ENCODE measurements at regions of chr19 and their contacts with region 1.

Region 1: DNA sequence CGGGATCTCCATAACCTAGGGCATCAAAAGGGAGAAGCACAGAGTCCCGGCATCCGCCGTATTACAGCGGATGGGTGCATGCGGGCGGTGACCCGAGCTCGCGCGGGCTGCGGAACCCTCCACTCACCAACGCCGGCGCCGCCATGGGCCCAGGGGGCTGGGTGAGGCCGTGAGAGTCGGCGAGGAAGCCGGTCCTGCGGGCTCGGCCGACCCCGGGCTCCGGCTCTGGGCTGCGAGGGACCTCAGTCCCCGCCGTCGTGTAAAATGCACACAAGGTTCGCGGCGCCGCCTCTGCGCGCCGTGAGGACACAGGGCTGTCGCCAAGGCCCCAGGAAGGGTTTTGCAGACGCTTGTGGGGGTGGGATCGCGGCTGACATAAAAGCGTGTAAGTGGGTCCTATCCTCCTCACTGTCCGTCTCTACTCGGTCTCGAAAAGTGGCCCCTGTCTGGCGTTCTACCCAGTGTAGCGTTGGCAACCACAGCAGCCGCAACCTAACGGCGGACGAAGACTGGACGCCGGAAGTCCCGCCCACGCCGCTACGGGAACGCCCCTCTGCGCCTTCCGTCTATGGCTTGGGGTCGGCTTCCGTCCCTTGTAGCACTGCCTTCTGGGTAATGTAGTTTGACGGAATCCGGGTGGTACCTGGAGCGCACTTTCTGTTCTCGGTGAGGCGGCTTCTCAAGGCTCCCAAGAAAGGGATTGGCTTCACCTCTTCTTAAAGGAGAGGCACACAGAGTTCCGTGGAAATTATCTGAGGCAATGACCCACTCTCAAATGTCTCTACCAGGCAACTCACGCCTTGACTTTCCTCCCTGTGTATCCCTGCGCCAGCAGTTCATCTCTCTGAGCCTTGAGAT is at the start of gene ZNF599:
- DNase-seq: peak; percentile 83 to 95
- ATAC-seq: peak; percentile 96 to 97 (median 97)
- H3K4me3 ChIP-seq: peak within 1 kb of the TSS; percentile 72
- H3K4me3 Mint-ChIP-seq: peak within 1 kb of the TSS; percentile 92
- H3K27ac ChIP-seq: peak within 1 kb of the TSS; percentile 73
- H3K27ac Mint-ChIP-seq: peak within 1 kb of the TSS; percentile 81 to 86
- H3K4me1 ChIP-seq: peaks cover 10% of the 10 kb centered on the region
- H3K4me1 Mint-ChIP-seq: peaks cover 13 to 19% of the 10 kb centered on the region in 2 donors
- H3K27me3 ChIP-seq: no peaks in the 10 kb centered on the region
- H3K27me3 Mint-ChIP-seq: peaks cover 8 to 9% of the 10 kb centered on the region in 2 donors
- CTCF ChIP-seq: no peak
- total RNA-seq, gene ZNF599: 4.6 to 5.1 (median 4.8) TPM

Region 2: GRCh38 chr19:34282611-34283519 is 490.1 kb before region 1 on chr19:
- intact Hi-C with region 1: no loop called
- DNase-seq: no peak
- ATAC-seq: no peak
- H3K4me3 ChIP-seq: no peak overlapping the region
- H3K4me3 Mint-ChIP-seq: no peak overlapping the region
- H3K27ac ChIP-seq: no peak overlapping the region
- H3K27ac Mint-ChIP-seq: no peak overlapping the region
- H3K4me1 ChIP-seq: no peaks in the 10 kb centered on the region
- H3K4me1 Mint-ChIP-seq: peaks cover 0 to 6% of the 10 kb centered on the region in 2 donors
- H3K27me3 ChIP-seq: no peaks in the 10 kb centered on the region
- H3K27me3 Mint-ChIP-seq: no peaks in the 10 kb centered on the region
- CTCF ChIP-seq: no peak

Region 3: GRCh38 chr19:34677386-34678084 is 95.4 kb before region 1 on chr19 and contains the start of gene ZNF302:
- intact Hi-C with region 1: loop called (anchors 1 kb)
- DNase-seq: peak; percentile 93 to 96
- ATAC-seq: peak; percentile 82 to 93 (median 90)
- H3K4me3 ChIP-seq: peak within 1 kb of the TSS; percentile 65
- H3K4me3 Mint-ChIP-seq: peak within 1 kb of the TSS; percentile 98
- H3K27ac ChIP-seq: peak within 1 kb of the TSS; percentile 77
- H3K27ac Mint-ChIP-seq: peak within 1 kb of the TSS; percentile 98 to 99
- H3K4me1 ChIP-seq: peaks cover 21% of the 10 kb centered on the region
- H3K4me1 Mint-ChIP-seq: peaks cover 29% of the 10 kb centered on the region in 2 donors
- H3K27me3 ChIP-seq: no peaks in the 10 kb centered on the region
- H3K27me3 Mint-ChIP-seq: peaks cover 7 to 23% of the 10 kb centered on the region in 2 donors
- CTCF ChIP-seq: no peak
- total RNA-seq, gene ZNF302: 13.8 to 23.6 (median 17.8) TPM

Region 4: GRCh38 chr19:34733826-34734600 is 38.9 kb before region 1 on chr19 and contains the start of gene ZNF181:
- intact Hi-C with region 1: loop called (anchors 1 kb)
- DNase-seq: peak; percentile 73 to 90
- ATAC-seq: peak; percentile 82 to 86 (median 83)
- H3K4me3 ChIP-seq: peak within 1 kb of the TSS; percentile 76
- H3K4me3 Mint-ChIP-seq: peak within 1 kb of the TSS; percentile 92
- H3K27ac ChIP-seq: peak within 1 kb of the TSS; percentile 93
- H3K27ac Mint-ChIP-seq: peak within 1 kb of the TSS; percentile 90 to 94
- H3K4me1 ChIP-seq: peaks cover 24% of the 10 kb centered on the region
- H3K4me1 Mint-ChIP-seq: peaks cover 21 to 31% of the 10 kb centered on the region in 2 donors
- H3K27me3 ChIP-seq: no peaks in the 10 kb centered on the region
- H3K27me3 Mint-ChIP-seq: no peaks in the 10 kb centered on the region
- CTCF ChIP-seq: no peak
- total RNA-seq, gene ZNF181: 3.2 to 3.7 (median 3.5) TPM

Region 5: DNA sequence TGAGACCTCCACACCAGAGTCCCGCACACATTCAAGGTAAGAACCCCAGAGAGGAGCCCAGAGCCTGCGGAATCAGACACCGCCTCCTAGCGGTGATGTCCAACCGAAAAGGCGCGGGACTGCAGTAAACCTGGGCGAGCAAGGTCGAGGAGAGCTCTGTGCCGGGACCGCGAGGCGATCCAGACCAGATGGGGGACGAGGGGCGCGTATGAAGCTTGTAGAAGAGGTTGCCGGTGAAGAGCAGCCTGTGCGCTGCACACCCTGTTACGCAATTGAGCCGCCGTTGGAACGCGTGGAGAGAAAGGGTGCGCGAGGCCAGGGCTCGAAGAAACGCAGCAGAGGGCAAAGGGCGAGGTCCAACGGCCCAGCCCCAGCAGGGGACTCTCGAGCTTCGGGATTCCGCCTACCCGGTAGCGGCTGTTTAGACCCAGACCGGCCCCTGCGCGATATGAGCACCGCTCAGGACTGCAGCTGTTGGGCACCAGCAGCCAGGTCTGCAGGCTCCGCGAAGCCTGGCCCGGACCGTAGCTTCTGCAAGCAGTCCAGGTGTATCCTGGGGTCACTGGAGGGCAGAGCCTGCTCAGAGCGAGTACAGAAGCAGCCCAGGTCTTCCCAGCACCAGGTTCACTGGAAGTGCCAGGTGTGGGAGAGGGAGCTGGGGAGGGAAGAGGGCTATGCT is 66.0 kb after region 1 on chr19:
- intact Hi-C with region 1: no loop called
- DNase-seq: peak in 1 of 2 donors; percentile 65
- ATAC-seq: peak in 1 of 3 donors; percentile 38
- H3K4me3 ChIP-seq: no peak overlapping the region
- H3K4me3 Mint-ChIP-seq: peak overlapping the region; percentile 42
- H3K27ac ChIP-seq: no peak overlapping the region
- H3K27ac Mint-ChIP-seq: no peak overlapping the region
- H3K4me1 ChIP-seq: peaks cover 7% of the 10 kb centered on the region
- H3K4me1 Mint-ChIP-seq: peaks cover 23 to 35% of the 10 kb centered on the region in 2 donors
- H3K27me3 ChIP-seq: no peaks in the 10 kb centered on the region
- H3K27me3 Mint-ChIP-seq: peaks cover 0 to 3% of the 10 kb centered on the region in 2 donors
- CTCF ChIP-seq: no peak

Measured in natural killer cell (primary cell).